ENCODE measurements at regions of chr5 and their contacts with region 1.

Region 1: DNA sequence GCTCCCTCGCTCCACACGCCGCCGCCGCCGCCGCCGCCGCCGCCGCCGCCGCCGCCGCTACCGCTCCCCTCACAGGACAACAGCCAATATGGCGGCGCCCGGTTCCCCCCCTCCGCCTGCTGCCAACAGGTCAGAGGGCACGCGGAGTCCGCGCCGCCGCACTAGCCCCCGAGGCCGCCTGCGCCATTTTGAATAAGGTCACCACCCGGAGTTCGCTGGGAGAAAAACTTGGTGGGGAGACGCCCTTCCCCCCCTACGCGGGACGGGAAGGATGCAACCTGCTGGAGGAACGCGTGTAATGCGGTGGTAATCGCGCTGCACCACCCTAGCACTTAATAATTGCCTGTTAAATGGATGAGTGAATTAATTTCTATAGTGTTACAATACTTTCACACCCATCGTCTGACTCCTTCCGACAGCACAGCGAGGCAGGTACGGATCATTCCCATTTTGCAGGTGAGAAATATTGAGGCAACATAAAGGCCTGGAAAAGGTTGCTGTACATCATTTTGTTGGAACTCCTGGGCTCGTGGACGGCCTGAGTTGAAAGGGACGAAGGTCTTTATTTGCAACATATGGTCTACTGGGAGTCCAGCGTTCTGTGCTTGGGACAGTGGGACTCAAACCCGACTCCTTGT is at the start of gene FAM193B:
- DNase-seq: peak; percentile 91 to 95
- H3K4me3 ChIP-seq: peak within 1 kb of the TSS; percentile 98 to 100
- H3K27ac ChIP-seq: peak within 1 kb of the TSS; percentile 92 to 95
- H3K4me1 ChIP-seq: peaks cover 0 to 36% (median 18%) of the 10 kb centered on the region in 4 donors
- H3K27me3 ChIP-seq: no peaks in the 10 kb centered on the region
- CTCF ChIP-seq: peak in 1 of 2 experiments; percentile 31

Region 2: DNA sequence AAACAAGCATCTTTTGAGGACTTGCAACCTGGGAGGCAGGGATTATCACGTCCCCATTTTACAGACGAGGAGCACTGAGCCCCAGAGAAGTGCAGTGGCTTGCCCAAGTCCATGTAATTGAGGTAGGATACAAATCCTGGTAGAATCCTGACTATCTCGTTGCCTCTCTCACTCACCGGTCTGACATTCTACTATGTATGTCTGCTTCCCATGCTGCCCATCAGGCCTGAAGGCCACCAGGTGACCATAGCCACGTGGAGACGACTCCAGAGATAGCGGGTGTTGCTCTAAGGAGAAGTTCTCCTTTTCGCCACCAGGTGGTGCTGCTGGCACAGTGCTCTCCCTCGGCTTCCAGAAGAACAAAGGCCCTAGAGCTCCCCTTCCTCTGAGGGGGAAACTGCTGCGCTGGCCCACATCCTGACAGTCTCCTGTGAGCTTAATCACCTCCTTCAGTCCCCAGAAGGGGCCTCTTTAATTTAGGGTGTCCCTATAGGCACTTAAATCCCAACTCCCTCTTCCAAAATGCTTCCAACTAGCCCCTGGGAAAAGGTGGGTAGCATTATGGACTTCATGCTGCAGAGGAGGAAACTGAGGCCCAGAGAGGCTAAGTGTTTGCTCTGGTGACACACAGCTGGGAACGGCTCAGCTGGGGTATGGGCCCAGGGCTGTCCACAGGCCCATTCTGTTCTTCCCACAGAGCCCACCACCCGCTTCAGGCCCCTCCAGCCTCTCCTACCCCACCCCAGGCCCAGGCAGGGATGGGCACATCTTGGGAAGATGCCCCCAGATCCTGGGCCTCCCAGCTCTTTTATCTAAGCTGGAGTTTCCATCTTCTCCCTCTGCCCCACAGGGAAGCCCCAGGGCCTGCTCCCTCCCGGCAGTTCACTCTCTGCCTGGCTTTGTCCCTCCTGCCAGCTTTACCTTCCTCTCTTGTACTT is 164.0 kb before region 1 on chr5:
- intact Hi-C with region 1: no loop called
- DNase-seq: peak; percentile 72 to 86
- H3K4me3 ChIP-seq: no peak overlapping the region
- H3K27ac ChIP-seq: no peak overlapping the region
- H3K4me1 ChIP-seq: peaks cover 0 to 6% (median 0%) of the 10 kb centered on the region in 4 donors
- H3K27me3 ChIP-seq: peaks cover 0 to 40% of the 10 kb centered on the region in 2 donors
- CTCF ChIP-seq: peak; percentile 95 to 99

Region 3: GRCh38 chr5:177576169-177576568 is 21.6 kb after region 1 on chr5:
- intact Hi-C with region 1: no loop called
- DNase-seq: no peak
- H3K4me3 ChIP-seq: no peak overlapping the region
- H3K27ac ChIP-seq: no peak overlapping the region
- H3K4me1 ChIP-seq: no peaks in the 10 kb centered on the region
- H3K27me3 ChIP-seq: no peaks in the 10 kb centered on the region
- CTCF ChIP-seq: no peak

Region 4: DNA sequence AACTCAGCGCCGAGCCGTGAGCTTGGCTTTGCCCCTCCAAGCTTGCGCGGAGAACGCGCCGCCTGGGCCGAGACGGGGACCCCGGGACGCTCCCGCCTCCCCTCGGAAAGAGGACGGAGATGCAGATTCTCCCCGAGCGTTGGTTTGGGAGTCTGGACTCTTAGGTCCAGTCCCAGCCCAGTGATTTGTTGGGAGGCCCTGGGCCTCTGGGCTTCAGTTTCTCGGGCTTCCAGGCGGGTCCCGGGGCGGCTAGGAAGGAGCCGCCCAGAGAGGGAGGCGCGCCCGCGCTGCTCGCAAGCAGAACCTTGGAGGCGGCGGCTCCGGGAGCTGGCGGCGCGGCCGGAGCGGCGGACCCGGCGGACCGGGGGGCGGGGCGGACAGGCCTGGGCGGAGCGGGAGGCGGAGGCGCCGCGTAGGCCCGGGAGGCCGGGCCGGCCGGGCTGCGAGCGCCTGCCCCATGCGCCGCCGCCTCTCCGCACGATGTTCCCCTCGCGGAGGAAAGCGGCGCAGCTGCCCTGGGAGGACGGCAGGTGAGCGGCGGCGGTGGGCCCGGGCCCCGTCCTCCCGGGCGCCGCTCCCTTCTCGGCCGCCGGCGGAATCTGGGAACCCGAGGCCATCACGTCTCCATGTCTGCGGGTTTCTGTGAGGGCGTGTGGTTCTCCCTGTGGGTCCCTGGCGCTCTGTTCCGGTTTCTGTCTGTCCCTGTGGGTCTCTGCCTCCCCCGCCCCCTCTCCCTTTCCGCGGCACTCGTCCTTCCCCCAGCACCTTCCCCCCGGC is 45.3 kb after region 1 on chr5 and contains the start of gene B4GALT7:
- intact Hi-C with region 1: loop called (anchors 5 kb)
- DNase-seq: peak; percentile 78 to 89
- H3K4me3 ChIP-seq: peak within 1 kb of the TSS; percentile 84 to 89
- H3K27ac ChIP-seq: peak within 1 kb of the TSS; percentile 85 to 98
- H3K4me1 ChIP-seq: peaks cover 0 to 32% (median 18%) of the 10 kb centered on the region in 4 donors
- H3K27me3 ChIP-seq: no peaks in the 10 kb centered on the region
- CTCF ChIP-seq: peak in 1 of 2 experiments; percentile 24

Region 5: DNA sequence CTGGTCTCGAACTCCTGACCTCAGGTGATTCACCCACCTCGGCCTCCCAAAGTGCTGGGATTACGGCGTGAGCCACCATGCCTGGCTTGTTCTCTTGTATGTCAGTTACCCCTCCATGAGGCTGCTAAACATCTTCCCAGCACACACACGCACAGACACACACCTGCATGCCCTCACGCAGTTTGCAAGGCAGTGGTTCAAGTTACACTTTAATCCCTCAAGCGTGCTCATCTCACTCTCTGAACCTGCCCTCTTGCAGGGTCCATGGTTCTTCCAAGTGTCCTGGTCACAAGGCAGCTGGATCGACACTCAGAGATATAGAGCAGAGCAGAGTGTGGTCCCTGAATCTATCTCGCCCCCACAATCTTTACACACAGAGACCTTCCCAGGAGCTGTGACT is 1961.6 kb after region 1 on chr5:
- intact Hi-C with region 1: no loop called
- DNase-seq: no peak
- H3K4me3 ChIP-seq: no peak overlapping the region
- H3K27ac ChIP-seq: no peak overlapping the region
- H3K4me1 ChIP-seq: no peaks in the 10 kb centered on the region
- H3K27me3 ChIP-seq: peaks cover 0 to 15% of the 10 kb centered on the region in 2 donors
- CTCF ChIP-seq: no peak